ENCODE measurements at regions of chr20 and their contacts with region 1.

Region 1: GRCh38 chr20:13458860-13459451 is 179.8 kb downstream of the TASP1 start:
- DNase-seq: peak; percentile 23
- CTCF ChIP-seq: peak; percentile 62

Region 2: GRCh38 chr20:13355411-13355810 is 103.5 kb before region 1 on chr20:
- in situ Hi-C with region 1: loop called (anchors 25 kb)
- DNase-seq: no peak
- CTCF ChIP-seq: no peak

Region 3: DNA sequence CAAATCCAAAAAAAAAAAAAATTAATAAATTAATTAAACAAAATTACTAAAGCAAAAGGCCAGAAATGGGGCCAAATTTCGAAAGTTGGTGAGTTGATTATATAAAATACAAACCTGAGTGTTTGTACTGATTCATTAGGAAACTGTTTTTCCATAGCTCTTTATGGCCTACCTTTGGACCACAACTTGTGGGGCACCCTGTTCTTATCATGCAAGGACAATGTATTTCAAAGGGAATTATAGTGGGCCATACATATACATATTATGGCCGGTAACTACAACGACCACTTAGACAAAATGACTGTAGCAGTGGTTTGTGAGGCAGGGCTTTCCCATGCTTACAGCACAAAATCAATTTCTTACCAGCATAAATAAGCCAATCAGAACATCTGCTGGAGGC is 256.2 kb after region 1 on chr20:
- in situ Hi-C with region 1: no loop called
- DNase-seq: no peak
- CTCF ChIP-seq: no peak

Region 4: DNA sequence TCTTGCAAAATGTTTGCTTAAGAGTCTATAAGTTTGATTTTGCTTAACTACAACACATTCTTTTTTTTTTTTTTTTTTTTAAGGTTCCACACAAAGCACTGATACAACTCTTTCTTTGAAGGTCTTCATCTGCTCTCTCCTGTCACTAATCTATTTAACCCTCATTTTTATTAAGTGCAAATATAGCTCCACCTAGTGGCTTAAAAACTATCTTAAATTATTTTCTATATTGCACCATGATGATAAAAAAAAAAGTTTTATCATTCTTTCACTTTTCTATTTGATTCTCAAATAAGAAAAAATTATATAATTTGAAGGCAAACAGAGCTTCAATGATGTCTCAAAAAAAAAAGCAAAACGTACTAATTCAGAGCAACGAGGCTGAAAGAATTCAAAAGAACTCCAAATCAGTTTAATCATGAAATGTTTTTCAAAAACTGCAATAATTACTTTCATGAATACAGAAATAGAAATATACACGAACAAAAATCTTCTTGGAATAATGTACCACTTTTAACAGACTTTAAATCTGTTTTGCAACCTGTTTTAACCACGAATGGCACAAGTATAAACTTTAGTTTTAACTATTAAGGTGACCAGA is 313.0 kb after region 1 on chr20:
- in situ Hi-C with region 1: loop called (anchors 25 kb)
- DNase-seq: no peak
- CTCF ChIP-seq: no peak

Measured in GM13977 (cell line).